Dorsolateral prefrontal cortex (tissue), 120 donors: ENCODE measurements at regions of chr5 and their contacts with region 1.

Region 1: GRCh38 chr5:77143998-77144836 is 57.1 kb upstream of the ZBED3 start:
- DNase-seq: peak; percentile 65 to 88 (median 82)
- H3K4me3 ChIP-seq: peak overlapping the region in 5 of 59 donors; percentile 7 to 29 (median 23)
- H3K27ac ChIP-seq: peak overlapping the region in 36 of 59 donors; percentile 1 to 83 (median 41)
- H3K27me3 ChIP-seq: no peaks in the 10 kb centered on the region
- CTCF ChIP-seq: peak; percentile 62 to 97 (median 90)

Region 2: DNA sequence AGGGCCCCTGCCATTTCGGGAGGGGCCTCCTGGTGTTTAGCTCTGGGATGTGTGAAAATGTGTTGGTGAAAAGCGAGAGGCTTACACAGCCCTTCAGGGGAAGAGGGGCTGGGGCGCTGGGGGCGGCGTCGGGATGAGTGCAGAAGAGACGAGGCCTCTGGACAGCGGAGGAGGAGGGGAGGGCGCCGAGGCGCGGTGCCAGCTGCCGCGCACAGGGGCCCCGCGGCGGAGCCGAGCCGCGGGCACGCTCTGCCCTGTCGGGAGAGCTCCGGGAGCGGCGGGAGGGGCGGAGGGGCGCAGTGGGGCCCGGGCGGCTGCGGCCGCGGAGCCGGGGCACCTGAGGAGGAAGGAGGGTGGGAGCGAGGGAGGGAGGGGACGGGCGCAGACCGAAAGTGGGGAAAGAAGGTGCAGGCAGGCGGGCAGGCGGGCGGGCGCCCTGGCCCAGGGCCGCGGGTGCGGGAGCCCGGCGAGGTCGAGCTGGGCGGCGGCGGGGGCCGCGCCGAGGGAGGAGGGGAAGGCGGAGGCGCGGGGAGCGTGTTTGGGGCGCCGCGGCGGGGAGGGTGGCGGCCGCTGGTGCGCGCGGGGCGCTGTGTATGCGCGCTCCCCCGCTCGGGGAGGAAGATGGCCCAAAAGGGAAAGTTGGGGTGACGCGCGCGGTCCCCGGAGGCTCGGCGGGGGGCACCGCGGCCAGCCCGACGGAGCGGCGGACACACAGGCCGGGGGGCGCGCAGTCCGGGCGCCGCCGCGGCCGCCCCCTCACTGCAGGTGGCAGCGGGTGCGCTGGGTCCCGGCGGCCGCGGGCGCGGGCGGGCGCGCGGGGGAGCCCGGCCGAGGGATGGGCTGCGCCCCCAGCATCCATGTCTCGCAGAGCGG is 66.1 kb after region 1 on chr5 and contains the start of gene PDE8B:
- intact Hi-C with region 1: loop called in 1 of 2 experiments (anchors 10 kb)
- DNase-seq: peak in 4 of 10 donors; percentile 36 to 67 (median 58)
- H3K4me3 ChIP-seq: peak within 1 kb of the TSS; percentile 59 to 86 (median 74)
- H3K27ac ChIP-seq: peak within 1 kb of the TSS in 58 of 59 donors; percentile 4 to 86 (median 70)
- H3K27me3 ChIP-seq: no peaks in the 10 kb centered on the region
- CTCF ChIP-seq: no peak
- total RNA-seq, gene PDE8B: 22.7 to 100 (median 54.6) TPM

Region 3: GRCh38 chr5:77239126-77239741 is 95.0 kb after region 1 on chr5:
- intact Hi-C with region 1: loop called in 1 of 2 experiments (anchors 5 kb)
- DNase-seq: no peak
- H3K4me3 ChIP-seq: no peak overlapping the region
- H3K27ac ChIP-seq: no peak overlapping the region
- H3K27me3 ChIP-seq: no peaks in the 10 kb centered on the region
- CTCF ChIP-seq: peak in 55 of 56 donors; percentile 16 to 68 (median 44)

Region 4: GRCh38 chr5:77255617-77256016 is 111.4 kb after region 1 on chr5:
- intact Hi-C with region 1: no loop called
- DNase-seq: no peak
- H3K4me3 ChIP-seq: no peak overlapping the region
- H3K27ac ChIP-seq: peak overlapping the region in 1 of 59 donors; percentile 29
- H3K27me3 ChIP-seq: no peaks in the 10 kb centered on the region
- CTCF ChIP-seq: no peak

Region 5: GRCh38 chr5:77437194-77437593 is 293.0 kb after region 1 on chr5:
- intact Hi-C with region 1: loop called in 1 of 2 experiments (anchors 10 kb)
- DNase-seq: peak in 1 of 10 donors; percentile 15
- H3K4me3 ChIP-seq: no peak overlapping the region
- H3K27ac ChIP-seq: peak overlapping the region in 39 of 59 donors; percentile 3 to 72 (median 32)
- H3K27me3 ChIP-seq: no peaks in the 10 kb centered on the region
- CTCF ChIP-seq: peak in 55 of 56 donors; percentile 10 to 72 (median 53)

Region 6: DNA sequence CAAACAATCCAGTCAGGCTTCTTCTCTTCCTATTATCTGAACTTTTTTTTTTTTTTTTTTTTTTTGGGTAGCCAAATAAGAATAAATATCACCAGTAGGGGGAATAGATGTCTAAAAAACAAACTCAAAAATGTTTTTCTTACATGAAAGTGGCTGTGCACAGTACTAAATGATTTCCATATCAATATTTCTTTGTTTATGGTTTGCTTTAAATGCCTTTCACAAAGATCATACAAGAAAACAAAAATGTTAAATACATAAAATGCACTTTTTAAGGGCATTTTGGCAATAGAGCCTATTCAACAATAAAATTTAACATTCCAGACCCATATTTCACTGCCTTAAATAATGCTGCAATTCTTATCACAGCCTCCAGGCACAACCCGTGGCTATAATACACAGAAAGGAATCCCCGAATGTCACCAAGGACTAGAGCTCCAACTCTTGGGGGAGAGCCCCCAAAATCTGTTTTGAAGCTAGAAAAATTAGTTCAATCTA is 723.0 kb after region 1 on chr5:
- intact Hi-C with region 1: no loop called
- DNase-seq: no peak
- H3K4me3 ChIP-seq: no peak overlapping the region
- H3K27ac ChIP-seq: peak overlapping the region in 54 of 59 donors; percentile 12 to 87 (median 70)
- H3K27me3 ChIP-seq: no peaks in the 10 kb centered on the region
- CTCF ChIP-seq: peak in 55 of 56 donors; percentile 15 to 67 (median 45)